ENCODE measurements at regions of chr3 and their contacts with region 1.

Region 1: GRCh38 chr3:154060238-154061000 is 60.8 kb upstream of the ARHGEF26 start:
- DNase-seq: no peak
- ATAC-seq: no peak
- H3K4me3 ChIP-seq: no peak overlapping the region
- H3K27ac ChIP-seq: no peak overlapping the region
- H3K4me1 ChIP-seq: no peaks in the 10 kb centered on the region
- H3K27me3 ChIP-seq: no peaks in the 10 kb centered on the region
- CTCF ChIP-seq: no peak

Region 2: DNA sequence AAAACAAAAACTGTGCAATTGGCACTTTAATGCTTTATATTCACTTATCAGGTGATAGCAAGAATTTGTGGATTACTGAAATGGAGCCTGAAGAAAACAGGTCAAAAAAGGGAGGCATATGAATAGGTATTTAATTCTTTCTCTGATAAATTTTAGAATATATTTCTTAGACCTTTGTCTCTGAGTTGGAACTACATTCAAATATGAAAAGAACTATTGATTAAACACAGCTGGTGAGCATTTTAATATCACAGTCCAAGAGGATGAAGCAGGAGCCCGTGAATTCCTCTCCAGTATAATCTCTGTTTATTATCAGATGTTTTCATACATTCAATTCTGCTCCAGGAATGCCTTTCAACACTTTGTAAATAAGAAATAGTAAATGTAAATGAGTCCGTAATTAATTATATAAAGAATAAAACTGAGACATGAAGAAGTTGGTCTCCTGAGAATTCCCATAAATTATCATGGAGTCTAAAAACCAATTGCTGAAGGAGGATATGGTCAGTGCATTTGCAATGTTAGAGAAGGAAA is 25.6 kb before region 1 on chr3:
- CTCF ChIA-PET with region 1: no interaction called
- POLR2A ChIA-PET with region 1: no interaction called
- intact Hi-C with region 1: loop called (anchors 1 kb)
- DNase-seq: no peak
- ATAC-seq: no peak
- H3K4me3 ChIP-seq: no peak overlapping the region
- H3K27ac ChIP-seq: no peak overlapping the region
- H3K4me1 ChIP-seq: no peaks in the 10 kb centered on the region
- H3K27me3 ChIP-seq: no peaks in the 10 kb centered on the region
- CTCF ChIP-seq: no peak